ENCODE measurements at regions of chr9 and their contacts with region 1.

Region 1: GRCh38 chr9:98263482-98264357 is 8.3 kb upstream of the TBC1D2 start:
- DNase-seq: peak; percentile 57 to 68
- ATAC-seq: peak; percentile 89 to 92
- H3K4me3 ChIP-seq: no peak overlapping the region
- H3K27ac ChIP-seq: no peak overlapping the region
- H3K4me1 ChIP-seq: no peaks in the 10 kb centered on the region
- H3K27me3 ChIP-seq: peaks cover 0 to 4% (median 0%) of the 10 kb centered on the region in 3 donors
- CTCF ChIP-seq: peak; percentile 69 to 93 (median 86)
- POLR2A ChIP-seq: no peak

Region 2: DNA sequence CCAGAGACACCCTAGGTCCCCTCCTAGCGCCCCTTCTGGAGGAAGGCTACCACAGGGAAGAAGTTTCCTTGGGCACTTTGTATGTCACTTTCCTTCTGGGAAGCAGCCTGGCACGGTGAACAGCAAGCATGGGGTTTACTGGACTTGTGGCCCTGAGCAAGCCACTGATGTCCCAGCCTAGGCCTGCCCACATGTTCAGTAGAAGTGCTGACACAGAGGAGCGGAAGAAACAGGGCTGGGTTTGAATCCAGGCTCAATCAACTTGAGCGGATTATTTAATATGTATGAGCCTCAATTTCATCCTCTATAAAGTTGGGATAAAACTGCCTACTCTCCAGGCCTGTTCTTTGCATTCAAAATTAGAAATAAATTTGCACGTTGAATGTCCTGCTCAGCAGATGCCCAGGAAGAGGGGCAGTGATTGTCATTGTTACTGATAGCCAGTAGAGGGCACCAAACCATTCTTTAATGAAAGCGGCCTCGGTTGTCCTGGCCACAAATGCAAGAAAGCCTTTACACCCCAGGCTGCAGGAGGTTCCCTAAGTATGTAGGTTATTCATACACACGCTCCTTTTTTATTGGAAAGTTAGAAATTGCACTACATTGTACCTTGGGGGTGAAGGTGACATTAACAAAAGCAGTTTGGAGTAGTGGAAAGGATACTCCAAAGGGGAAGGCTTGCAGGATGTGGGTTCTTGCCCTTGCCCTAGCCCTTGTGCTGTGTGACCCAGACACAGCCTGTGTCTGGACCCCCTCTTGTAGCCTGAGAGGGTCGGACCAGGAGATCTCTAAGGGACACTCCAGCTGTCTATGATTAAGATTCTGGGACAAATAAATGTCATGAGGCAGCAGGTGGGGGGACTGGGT is 553.1 kb before region 1 on chr9:
- in situ Hi-C with region 1: loop called (anchors 10 to 25 kb)
- intact Hi-C with region 1: loop called (anchors 2 kb)
- DNase-seq: peak in 1 of 2 donors; percentile 19
- ATAC-seq: peak; percentile 80 to 94
- H3K4me3 ChIP-seq: no peak overlapping the region
- H3K27ac ChIP-seq: no peak overlapping the region
- H3K4me1 ChIP-seq: peaks cover 0 to 5% of the 10 kb centered on the region in 2 donors
- H3K27me3 ChIP-seq: no peaks in the 10 kb centered on the region
- CTCF ChIP-seq: peak; percentile 52 to 84 (median 75)
- POLR2A ChIP-seq: no peak

Region 3: DNA sequence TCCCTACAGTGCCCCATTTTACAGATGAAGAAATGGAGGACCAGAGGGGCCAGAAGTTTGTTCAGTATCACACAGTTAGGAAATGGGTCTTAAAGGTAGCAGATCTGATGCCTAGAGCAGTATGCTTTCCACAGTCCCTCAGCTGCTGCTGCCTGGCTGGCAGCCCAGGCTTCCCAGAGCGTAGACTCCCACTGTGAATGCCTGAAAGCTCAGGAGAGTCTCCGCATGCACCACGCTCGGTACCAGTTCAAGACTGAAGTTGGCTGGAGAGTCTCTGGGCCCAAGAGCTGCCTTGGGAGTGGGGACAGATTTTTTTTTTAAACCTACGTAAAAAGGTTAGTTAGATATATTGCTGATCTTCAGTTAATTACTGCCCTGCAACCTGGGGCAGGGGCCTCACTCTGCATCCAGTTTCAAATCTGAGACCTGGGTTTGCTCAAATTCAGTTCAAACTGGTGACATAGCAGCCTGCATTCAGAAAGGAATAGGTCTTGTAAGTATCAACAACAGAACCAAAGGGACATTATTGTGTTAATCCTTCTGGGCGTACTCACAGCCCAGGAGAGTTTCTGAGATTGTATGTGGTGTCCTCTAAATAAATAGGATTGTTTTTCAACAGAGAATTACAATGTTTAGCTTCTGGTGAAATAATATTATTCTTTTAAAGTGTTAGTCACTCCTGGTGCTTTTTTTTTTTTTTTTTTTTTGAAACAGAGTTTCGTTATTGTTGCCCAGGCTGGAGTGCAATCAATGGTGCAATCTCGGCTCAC is 198.9 kb before region 1 on chr9:
- in situ Hi-C with region 1: loop called in 3 of 4 experiments (anchors 10 to 25 kb)
- intact Hi-C with region 1: no loop called
- DNase-seq: no peak
- ATAC-seq: no peak
- H3K4me3 ChIP-seq: no peak overlapping the region
- H3K27ac ChIP-seq: no peak overlapping the region
- H3K4me1 ChIP-seq: no peaks in the 10 kb centered on the region
- H3K27me3 ChIP-seq: no peaks in the 10 kb centered on the region
- CTCF ChIP-seq: no peak
- POLR2A ChIP-seq: no peak

Region 4: GRCh38 chr9:98074115-98074990 is 189.4 kb before region 1 on chr9:
- in situ Hi-C with region 1: loop called in 3 of 4 experiments (anchors 10 to 25 kb)
- intact Hi-C with region 1: no loop called
- DNase-seq: peak; percentile 20 to 30
- ATAC-seq: peak in 1 of 2 donors; percentile 63
- H3K4me3 ChIP-seq: no peak overlapping the region
- H3K27ac ChIP-seq: no peak overlapping the region
- H3K4me1 ChIP-seq: peaks cover 6 to 7% of the 10 kb centered on the region in 2 donors
- H3K27me3 ChIP-seq: no peaks in the 10 kb centered on the region
- CTCF ChIP-seq: peak; percentile 64 to 88 (median 69)
- POLR2A ChIP-seq: no peak

Region 5: DNA sequence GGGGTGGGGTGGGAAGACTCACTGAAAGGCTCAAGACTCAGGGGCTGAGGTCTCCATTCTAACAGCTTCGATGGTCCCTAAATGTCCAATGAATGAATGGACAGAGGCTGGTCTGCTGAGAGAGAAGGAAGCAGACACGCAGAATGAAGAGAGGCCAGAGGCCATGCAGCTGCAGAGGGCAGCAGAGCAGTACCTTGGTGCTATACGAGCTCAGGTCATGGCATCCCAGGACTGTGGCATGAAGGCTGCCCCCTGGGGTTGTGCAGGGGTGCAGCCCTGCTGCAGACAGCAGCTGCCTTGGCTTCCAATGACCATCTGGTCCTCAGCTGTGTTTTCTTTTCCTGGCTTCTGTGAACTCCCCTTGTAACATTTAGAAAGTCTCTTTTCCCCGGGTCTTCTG is 56.1 kb before region 1 on chr9:
- in situ Hi-C with region 1: loop called (anchors 5 to 10 kb)
- intact Hi-C with region 1: loop called (anchors 1 kb)
- DNase-seq: no peak
- ATAC-seq: no peak
- H3K4me3 ChIP-seq: no peak overlapping the region
- H3K27ac ChIP-seq: no peak overlapping the region
- H3K4me1 ChIP-seq: no peaks in the 10 kb centered on the region
- H3K27me3 ChIP-seq: no peaks in the 10 kb centered on the region
- CTCF ChIP-seq: no peak
- POLR2A ChIP-seq: no peak

Region 6: GRCh38 chr9:98333703-98334582 is 70.2 kb after region 1 on chr9:
- in situ Hi-C with region 1: no loop called
- intact Hi-C with region 1: no loop called
- DNase-seq: no peak
- ATAC-seq: no peak
- H3K4me3 ChIP-seq: no peak overlapping the region
- H3K27ac ChIP-seq: no peak overlapping the region
- H3K4me1 ChIP-seq: no peaks in the 10 kb centered on the region
- H3K27me3 ChIP-seq: peaks cover 0 to 4% (median 0%) of the 10 kb centered on the region in 3 donors
- CTCF ChIP-seq: no peak
- POLR2A ChIP-seq: no peak